CD8-positive, alpha-beta T cell (primary cell): ENCODE measurements at regions of chr4 and their contacts with region 1.

Region 1: DNA sequence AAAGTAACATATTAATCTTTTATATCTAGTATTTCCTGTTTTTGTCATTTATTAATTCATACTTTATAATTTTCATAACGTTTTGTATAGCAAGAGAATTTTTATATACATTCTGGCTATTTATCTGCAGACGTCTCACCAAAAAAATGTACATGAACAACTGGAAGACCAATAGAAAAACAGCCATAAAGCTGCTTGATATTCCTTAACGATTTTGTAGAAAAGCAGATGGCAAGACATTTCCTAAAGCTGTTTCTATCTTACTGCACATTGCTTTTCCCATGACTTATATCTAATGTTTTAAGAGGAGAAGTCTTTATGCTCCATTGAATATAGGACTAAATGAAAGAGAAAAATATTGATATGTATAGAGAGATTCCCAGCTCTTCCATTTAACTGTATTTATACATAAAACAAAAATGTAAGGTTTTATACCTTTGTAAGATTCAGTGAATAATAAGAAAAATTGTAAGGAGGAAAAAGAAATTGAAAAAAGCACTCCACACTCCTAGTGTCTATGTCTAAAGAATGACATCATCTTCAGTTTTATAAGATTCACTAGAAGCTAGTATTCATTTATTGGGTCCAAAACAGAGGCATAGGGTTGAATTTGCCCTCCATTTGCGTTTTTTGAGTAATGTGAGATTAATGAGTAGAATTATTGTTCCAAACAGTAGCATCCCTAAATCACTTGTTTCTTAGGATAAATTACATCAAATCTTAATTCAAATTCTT is 248.5 kb downstream of the PPP3CA start:
- DNase-seq: no peak
- ATAC-seq: no peak
- H3K4me3 ChIP-seq: no peak overlapping the region
- H3K4me3 Mint-ChIP-seq: no peak overlapping the region
- H3K27ac ChIP-seq: no peak overlapping the region
- H3K27ac Mint-ChIP-seq: no peak overlapping the region
- H3K4me1 ChIP-seq: no peaks in the 10 kb centered on the region
- H3K4me1 Mint-ChIP-seq: peaks cover 7% of the 10 kb centered on the region
- H3K27me3 ChIP-seq: no peaks in the 10 kb centered on the region
- H3K27me3 Mint-ChIP-seq: no peaks in the 10 kb centered on the region
- CTCF ChIP-seq: no peak

Region 2: DNA sequence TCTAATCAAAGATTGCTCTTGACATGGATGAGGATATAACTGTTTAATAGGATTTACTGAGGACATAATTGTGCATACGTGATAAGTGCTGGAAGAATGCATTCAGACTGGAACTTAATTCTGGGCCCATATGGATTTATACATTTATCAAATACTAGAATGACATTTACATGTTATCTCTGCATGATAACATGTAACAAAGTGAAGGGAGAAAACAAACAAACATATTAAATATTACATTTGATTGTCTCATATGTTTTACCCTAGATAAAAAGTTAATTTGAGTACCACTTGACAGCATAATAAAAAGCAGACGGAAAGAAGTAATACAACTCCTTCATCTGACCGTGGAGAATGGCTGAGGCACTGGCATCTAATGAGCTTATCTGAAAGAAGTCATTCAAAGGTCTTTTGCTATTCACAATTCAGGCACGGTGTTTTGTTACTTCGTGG is 49.3 kb before region 1 on chr4:
- CTCF ChIA-PET with region 1: no interaction called
- POLR2A ChIA-PET with region 1: interaction called, 4 read pairs
- intact Hi-C with region 1: loop called in 1 of 2 experiments (anchors 10 kb)
- DNase-seq: no peak
- ATAC-seq: no peak
- H3K4me3 ChIP-seq: no peak overlapping the region
- H3K4me3 Mint-ChIP-seq: no peak overlapping the region
- H3K27ac ChIP-seq: no peak overlapping the region
- H3K27ac Mint-ChIP-seq: no peak overlapping the region
- H3K4me1 ChIP-seq: no peaks in the 10 kb centered on the region
- H3K4me1 Mint-ChIP-seq: peaks cover 3% of the 10 kb centered on the region
- H3K27me3 ChIP-seq: no peaks in the 10 kb centered on the region
- H3K27me3 Mint-ChIP-seq: no peaks in the 10 kb centered on the region
- CTCF ChIP-seq: no peak